Ascending aorta (tissue), 2 donors: ENCODE measurements at regions of chr12 and their contacts with region 1.

Region 1: GRCh38 chr12:52192173-52192791 is 468 bp upstream of the KRT80 start:
- DNase-seq: peak; percentile 85 to 97
- H3K4me3 ChIP-seq: no peak overlapping the region
- H3K27ac ChIP-seq: peak overlapping the region; percentile 65 to 84
- H3K4me1 ChIP-seq: peaks cover 29 to 52% of the 10 kb centered on the region in 2 donors
- H3K27me3 ChIP-seq: no peaks in the 10 kb centered on the region
- CTCF ChIP-seq: no peak

Region 2: DNA sequence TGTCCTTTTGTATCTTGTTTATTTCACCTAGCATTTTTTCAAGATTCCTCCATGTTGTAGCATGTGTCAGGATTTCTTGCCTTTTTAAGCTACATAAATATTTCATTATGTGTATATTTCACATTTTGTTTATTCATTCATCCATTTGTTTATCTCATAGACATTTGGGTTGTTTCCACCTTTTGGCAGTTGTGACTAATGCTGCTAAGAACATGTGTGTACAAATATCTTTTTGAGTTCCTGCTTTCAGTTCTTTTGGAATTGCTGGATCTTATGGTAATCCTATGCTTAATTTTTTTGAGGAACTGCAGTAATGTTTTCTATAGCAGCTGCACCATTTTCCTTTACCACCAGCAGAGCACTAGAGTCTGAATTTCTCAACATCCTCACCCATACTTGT is 538.9 kb before region 1 on chr12:
- intact Hi-C with region 1: no loop called
- DNase-seq: no peak
- H3K4me3 ChIP-seq: no peak overlapping the region
- H3K27ac ChIP-seq: no peak overlapping the region
- H3K4me1 ChIP-seq: no peaks in the 10 kb centered on the region
- H3K27me3 ChIP-seq: no peaks in the 10 kb centered on the region
- CTCF ChIP-seq: no peak

Region 3: DNA sequence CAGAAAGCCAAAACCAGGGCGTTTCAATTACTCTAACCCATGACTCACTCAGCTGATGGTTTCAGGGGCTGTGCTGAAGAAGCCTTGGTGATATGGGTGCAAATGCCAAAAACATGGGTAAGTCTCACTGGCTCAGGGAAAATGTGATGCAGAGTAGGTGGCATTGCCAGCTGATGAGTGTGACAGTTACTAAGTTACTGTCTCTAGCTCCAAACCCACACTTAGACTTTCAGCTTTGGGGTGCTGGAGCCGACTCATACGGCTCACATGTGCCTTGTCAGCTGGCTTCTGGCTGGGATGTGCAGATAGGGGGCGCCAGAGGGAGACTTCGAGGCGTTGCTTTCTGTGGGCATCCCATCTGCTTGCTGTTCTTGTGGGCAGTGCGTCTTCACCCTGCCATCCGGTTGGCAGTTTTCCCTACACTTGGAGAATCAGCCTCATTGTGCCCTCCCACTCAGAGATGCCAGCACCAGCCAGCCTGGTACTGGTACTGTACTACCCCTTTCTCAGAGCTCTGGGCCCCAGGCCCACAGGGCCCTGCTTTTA is 29.7 kb after region 1 on chr12:
- intact Hi-C with region 1: loop called (anchors 2 kb)
- DNase-seq: peak in 1 of 2 donors; percentile 85
- H3K4me3 ChIP-seq: no peak overlapping the region
- H3K27ac ChIP-seq: peak overlapping the region; percentile 22 to 54
- H3K4me1 ChIP-seq: peaks cover 7 to 44% of the 10 kb centered on the region in 2 donors
- H3K27me3 ChIP-seq: no peaks in the 10 kb centered on the region
- CTCF ChIP-seq: peak in 2 of 3 experiments; percentile 36 to 45

Region 4: DNA sequence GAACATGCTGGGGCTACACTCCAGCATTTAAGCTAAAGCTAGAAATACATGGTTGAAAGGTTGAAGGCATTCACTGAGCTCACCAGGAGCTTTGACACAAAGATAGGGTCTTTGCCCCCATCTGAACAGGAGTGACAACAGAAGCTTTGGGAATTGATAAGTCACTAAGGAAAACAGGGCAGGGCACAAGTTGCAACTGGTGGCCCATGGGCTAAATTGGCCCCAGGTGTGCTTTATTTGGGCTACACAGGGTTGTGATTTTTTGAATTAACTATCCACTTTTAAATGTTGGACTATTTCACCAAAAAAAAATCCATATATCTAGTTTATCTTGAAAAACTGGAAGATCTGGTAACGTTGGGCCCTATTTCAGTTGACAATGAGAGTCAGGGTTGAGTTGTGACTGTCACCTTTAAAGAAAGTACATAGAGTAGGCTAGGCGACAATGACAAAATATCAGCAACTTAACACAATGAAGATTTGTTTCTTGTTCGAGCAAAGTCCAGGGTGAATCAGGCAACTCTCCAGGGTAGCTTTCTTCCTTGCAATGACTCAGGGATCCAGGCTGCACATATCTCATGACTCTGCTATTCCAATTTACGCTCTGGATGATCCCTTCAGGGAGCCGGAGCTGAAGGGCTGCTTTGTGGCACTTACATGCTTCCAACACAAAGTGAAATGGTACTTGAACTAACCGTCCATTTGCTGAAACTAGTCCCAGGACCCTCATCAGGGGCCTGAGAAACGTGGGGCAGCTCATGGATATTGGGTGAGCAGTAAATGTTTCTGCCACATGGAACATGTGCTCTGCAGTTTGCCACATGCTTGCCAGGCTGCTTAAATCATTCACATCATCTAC is 800.6 kb after region 1 on chr12:
- intact Hi-C with region 1: no loop called
- DNase-seq: no peak
- H3K4me3 ChIP-seq: no peak overlapping the region
- H3K27ac ChIP-seq: no peak overlapping the region
- H3K4me1 ChIP-seq: no peaks in the 10 kb centered on the region
- H3K27me3 ChIP-seq: no peaks in the 10 kb centered on the region
- CTCF ChIP-seq: no peak